ENCODE measurements at regions of chr3 and their contacts with region 1.

Region 1: DNA sequence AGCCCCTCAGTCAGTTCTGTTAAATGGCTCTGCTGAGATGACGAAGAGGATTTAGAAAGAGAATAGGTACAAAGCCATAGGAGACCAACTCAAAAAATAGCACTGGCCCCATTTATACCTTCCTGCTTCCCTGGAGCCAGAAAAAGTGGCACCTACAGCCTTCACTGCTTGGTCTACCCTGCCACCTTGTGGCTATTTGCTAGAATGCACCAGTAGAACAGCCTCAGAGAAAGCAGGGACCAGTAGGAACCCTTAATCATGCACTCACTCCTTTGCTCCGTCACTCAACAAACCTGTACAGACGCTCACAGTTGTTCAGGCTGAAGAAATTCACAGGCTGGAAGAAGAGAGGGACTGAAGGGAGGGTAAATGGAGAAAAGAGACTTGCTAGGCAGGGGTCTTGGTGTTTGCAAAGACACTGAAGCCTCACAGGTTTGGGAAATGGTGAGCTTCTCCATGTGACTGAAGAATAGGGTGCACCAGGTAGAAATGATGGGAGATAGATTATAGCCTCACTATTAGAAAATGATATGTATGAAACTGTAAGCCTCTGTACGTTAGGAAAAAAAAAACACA is 12.1 kb upstream of the RTP2 start:
- DNase-seq: peak in 4 of 5 donors; percentile 52 to 78 (median 58)
- H3K4me3 ChIP-seq: no peak overlapping the region
- H3K27ac ChIP-seq: no peak overlapping the region
- H3K4me1 ChIP-seq: no peaks in the 10 kb centered on the region
- H3K27me3 ChIP-seq: no peaks in the 10 kb centered on the region
- CTCF ChIP-seq: peak; percentile 79 to 85 (median 80)
- EP300 ChIP-seq: no peak
- POLR2A ChIP-seq: no peak

Region 2: DNA sequence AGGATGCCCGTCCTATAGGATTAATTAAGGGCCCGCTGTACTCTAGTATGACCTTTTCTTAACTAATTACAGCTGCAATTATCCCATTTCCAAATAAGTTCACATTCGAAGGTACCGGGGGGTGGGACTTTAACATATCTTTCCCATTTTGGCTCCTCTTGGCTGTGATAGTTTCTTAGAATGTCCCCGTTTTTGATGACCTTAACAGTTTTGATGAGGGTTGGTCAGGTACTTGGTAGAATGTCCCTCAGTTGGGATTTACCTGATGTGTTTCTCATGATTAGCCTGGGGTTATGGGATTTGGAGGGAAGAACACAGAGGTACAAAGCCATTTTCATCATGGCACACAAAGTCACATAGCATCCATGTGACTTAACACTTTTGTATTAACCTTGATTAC is 499.0 kb before region 1 on chr3:
- intact Hi-C with region 1: loop called in 1 of 4 experiments (anchors 5 kb)
- DNase-seq: no peak
- H3K4me3 ChIP-seq: no peak overlapping the region
- H3K27ac ChIP-seq: no peak overlapping the region
- H3K4me1 ChIP-seq: peaks cover 3% of the 10 kb centered on the region
- H3K27me3 ChIP-seq: no peaks in the 10 kb centered on the region
- CTCF ChIP-seq: no peak
- EP300 ChIP-seq: no peak
- POLR2A ChIP-seq: no peak

Region 3: DNA sequence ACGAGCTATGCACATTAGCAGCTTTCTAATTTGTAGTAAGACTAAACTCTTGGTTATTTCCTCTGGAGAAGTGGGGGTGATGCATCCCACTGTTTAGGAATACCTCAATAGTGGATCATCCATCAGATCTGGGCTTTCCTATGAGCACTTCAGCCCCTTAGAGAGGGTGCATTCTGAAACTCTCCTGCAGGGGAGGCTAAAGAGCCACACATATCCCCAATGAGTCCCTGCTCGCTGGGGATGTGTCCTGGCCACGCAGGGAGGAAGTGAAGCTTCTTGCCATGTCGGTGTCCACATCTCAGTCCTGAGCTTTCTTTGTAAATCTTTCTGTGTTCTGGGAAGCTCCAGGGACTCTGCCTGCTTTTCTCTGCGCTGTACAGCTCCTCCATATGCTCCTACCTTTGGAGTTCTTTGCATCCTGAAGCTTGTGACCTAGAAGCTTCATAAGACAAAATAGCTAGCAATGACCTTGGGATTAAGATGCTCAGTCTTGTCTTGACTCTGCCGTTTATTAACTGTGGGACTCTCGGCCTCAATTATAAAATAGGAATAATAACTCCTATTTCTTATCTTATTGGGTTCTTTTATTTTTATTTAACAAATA is 394.7 kb before region 1 on chr3:
- intact Hi-C with region 1: loop called in 1 of 4 experiments (anchors 10 kb)
- DNase-seq: peak; percentile 45 to 73 (median 68)
- H3K4me3 ChIP-seq: no peak overlapping the region
- H3K27ac ChIP-seq: no peak overlapping the region
- H3K4me1 ChIP-seq: no peaks in the 10 kb centered on the region
- H3K27me3 ChIP-seq: no peaks in the 10 kb centered on the region
- CTCF ChIP-seq: peak; percentile 31 to 49 (median 46)
- EP300 ChIP-seq: no peak
- POLR2A ChIP-seq: no peak

Region 4: DNA sequence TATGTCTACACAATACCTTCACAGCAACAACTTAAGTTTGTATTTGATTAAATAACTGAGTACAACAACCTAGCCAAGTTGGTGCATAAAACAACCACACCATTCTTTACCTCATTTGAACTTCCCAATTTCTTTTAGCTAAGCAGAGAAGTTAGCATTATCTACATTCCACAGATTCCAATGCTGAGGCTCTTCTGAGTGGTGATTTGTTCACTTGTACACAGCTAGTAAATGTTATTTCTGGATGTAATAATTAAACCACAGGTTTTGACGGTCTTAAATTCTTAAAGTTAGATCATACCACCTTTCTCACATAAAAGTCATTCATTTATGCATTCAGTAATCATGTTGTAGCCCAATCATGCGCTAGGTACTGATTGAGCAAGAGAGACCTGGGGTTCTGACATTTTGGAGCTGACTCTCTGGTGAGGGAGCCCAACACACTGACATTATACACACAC is 146.8 kb before region 1 on chr3:
- intact Hi-C with region 1: no loop called
- DNase-seq: no peak
- H3K4me3 ChIP-seq: no peak overlapping the region
- H3K27ac ChIP-seq: no peak overlapping the region
- H3K4me1 ChIP-seq: no peaks in the 10 kb centered on the region
- H3K27me3 ChIP-seq: no peaks in the 10 kb centered on the region
- CTCF ChIP-seq: no peak
- EP300 ChIP-seq: no peak
- POLR2A ChIP-seq: no peak